B cell (primary cell): ENCODE measurements at regions of chr1 and their contacts with region 1.

Region 1: DNA sequence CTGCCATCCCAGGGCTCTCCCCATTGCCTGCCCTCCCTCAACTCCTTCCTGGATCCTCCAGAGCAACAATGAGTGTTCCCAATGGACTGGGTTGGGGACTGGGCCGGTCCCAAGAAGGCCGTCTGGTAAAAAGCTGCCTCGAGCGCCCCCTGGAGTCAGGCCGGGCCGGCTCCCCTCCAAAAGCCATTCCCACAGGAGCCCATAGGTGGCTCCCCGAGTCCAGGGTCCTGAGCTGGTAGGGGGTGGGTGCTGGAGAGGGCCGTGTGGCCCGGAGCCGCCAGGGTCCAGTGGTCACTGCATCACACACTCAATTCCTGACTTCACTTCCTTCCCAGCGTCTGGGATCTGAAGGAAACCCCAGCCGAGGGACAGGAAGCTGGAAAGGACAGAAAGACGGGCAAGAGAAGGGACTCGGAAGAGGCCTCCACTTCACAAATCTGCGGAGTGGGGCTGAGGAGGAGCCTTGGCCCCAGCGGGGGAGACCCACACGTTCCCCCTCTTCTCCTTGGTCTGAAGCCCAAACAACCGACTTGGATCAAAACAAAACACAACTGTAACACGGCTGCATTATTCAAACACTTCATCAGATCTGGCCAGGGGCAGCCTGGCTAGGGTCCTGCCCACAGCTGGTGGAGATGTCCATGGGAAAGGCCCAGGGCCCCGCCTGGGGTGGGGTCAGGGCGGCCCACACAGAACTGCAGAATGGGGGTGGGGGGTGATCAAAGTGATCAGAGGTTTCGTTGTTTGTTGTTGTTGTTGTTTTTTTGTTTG is 10.9 kb upstream of the ALDH4A1 start:
- DNase-seq: peak; percentile 78
- ATAC-seq: peak; percentile 88
- H3K4me3 ChIP-seq: no peak overlapping the region
- H3K4me3 Mint-ChIP-seq: no peak overlapping the region
- H3K27ac ChIP-seq: no peak overlapping the region
- H3K27ac Mint-ChIP-seq: peak overlapping the region; percentile 56
- H3K4me1 ChIP-seq: peaks cover 7 to 16% of the 10 kb centered on the region in 2 donors
- H3K4me1 Mint-ChIP-seq: peaks cover 13% of the 10 kb centered on the region
- H3K27me3 ChIP-seq: no peaks in the 10 kb centered on the region
- H3K27me3 Mint-ChIP-seq: no peaks in the 10 kb centered on the region
- CTCF ChIP-seq: peak; percentile 89

Region 2: GRCh38 chr1:18883636-18884418 is 29.4 kb before region 1 on chr1:
- CTCF ChIA-PET with region 1: interaction called, 46 read pairs
- POLR2A ChIA-PET with region 1: no interaction called
- intact Hi-C with region 1: loop called (anchors 1 kb)
- DNase-seq: peak; percentile 76
- ATAC-seq: peak; percentile 79
- H3K4me3 ChIP-seq: no peak overlapping the region
- H3K4me3 Mint-ChIP-seq: no peak overlapping the region
- H3K27ac ChIP-seq: no peak overlapping the region
- H3K27ac Mint-ChIP-seq: no peak overlapping the region
- H3K4me1 ChIP-seq: no peaks in the 10 kb centered on the region
- H3K4me1 Mint-ChIP-seq: no peaks in the 10 kb centered on the region
- H3K27me3 ChIP-seq: no peaks in the 10 kb centered on the region
- H3K27me3 Mint-ChIP-seq: no peaks in the 10 kb centered on the region
- CTCF ChIP-seq: peak; percentile 96

Region 3: GRCh38 chr1:18926315-18927081 is 13.2 kb after region 1 on chr1:
- CTCF ChIA-PET with region 1: interaction called, 78 read pairs
- POLR2A ChIA-PET with region 1: interaction called, 8 read pairs
- intact Hi-C with region 1: no loop called
- DNase-seq: peak; percentile 72
- ATAC-seq: peak; percentile 84
- H3K4me3 ChIP-seq: peak overlapping the region; percentile 11 to 51 (median 38)
- H3K4me3 Mint-ChIP-seq: peak overlapping the region; percentile 68
- H3K27ac ChIP-seq: peak overlapping the region; percentile 73 to 85
- H3K27ac Mint-ChIP-seq: peak overlapping the region; percentile 97
- H3K4me1 ChIP-seq: peaks cover 53 to 54% of the 10 kb centered on the region in 2 donors
- H3K4me1 Mint-ChIP-seq: peaks cover 71% of the 10 kb centered on the region
- H3K27me3 ChIP-seq: no peaks in the 10 kb centered on the region
- H3K27me3 Mint-ChIP-seq: no peaks in the 10 kb centered on the region
- CTCF ChIP-seq: peak; percentile 19

Region 4: GRCh38 chr1:18949686-18950400 is 36.6 kb after region 1 on chr1:
- CTCF ChIA-PET with region 1: interaction called, 157 read pairs
- POLR2A ChIA-PET with region 1: interaction called, 5 read pairs
- intact Hi-C with region 1: no loop called
- DNase-seq: peak; percentile 56
- ATAC-seq: no peak
- H3K4me3 ChIP-seq: peak overlapping the region; percentile 23 to 64 (median 47)
- H3K4me3 Mint-ChIP-seq: peak overlapping the region; percentile 85
- H3K27ac ChIP-seq: peak overlapping the region; percentile 97 to 100
- H3K27ac Mint-ChIP-seq: peak overlapping the region; percentile 98
- H3K4me1 ChIP-seq: peaks cover 91 to 97% of the 10 kb centered on the region in 2 donors
- H3K4me1 Mint-ChIP-seq: peaks cover 94% of the 10 kb centered on the region
- H3K27me3 ChIP-seq: no peaks in the 10 kb centered on the region
- H3K27me3 Mint-ChIP-seq: no peaks in the 10 kb centered on the region
- CTCF ChIP-seq: no peak

Region 5: GRCh38 chr1:18965206-18966173 is 52.2 kb after region 1 on chr1:
- CTCF ChIA-PET with region 1: interaction called, 133 read pairs
- POLR2A ChIA-PET with region 1: interaction called, 19 read pairs
- intact Hi-C with region 1: no loop called
- DNase-seq: no peak
- ATAC-seq: no peak
- H3K4me3 ChIP-seq: no peak overlapping the region
- H3K4me3 Mint-ChIP-seq: no peak overlapping the region
- H3K27ac ChIP-seq: no peak overlapping the region
- H3K27ac Mint-ChIP-seq: no peak overlapping the region
- H3K4me1 ChIP-seq: no peaks in the 10 kb centered on the region
- H3K4me1 Mint-ChIP-seq: no peaks in the 10 kb centered on the region
- H3K27me3 ChIP-seq: peaks cover 0 to 4% (median 2%) of the 10 kb centered on the region in 4 experiments
- H3K27me3 Mint-ChIP-seq: peaks cover 29% of the 10 kb centered on the region
- CTCF ChIP-seq: no peak